IMR-90 (cell line): ENCODE measurements at regions of chr6 and their contacts with region 1.

Region 1: DNA sequence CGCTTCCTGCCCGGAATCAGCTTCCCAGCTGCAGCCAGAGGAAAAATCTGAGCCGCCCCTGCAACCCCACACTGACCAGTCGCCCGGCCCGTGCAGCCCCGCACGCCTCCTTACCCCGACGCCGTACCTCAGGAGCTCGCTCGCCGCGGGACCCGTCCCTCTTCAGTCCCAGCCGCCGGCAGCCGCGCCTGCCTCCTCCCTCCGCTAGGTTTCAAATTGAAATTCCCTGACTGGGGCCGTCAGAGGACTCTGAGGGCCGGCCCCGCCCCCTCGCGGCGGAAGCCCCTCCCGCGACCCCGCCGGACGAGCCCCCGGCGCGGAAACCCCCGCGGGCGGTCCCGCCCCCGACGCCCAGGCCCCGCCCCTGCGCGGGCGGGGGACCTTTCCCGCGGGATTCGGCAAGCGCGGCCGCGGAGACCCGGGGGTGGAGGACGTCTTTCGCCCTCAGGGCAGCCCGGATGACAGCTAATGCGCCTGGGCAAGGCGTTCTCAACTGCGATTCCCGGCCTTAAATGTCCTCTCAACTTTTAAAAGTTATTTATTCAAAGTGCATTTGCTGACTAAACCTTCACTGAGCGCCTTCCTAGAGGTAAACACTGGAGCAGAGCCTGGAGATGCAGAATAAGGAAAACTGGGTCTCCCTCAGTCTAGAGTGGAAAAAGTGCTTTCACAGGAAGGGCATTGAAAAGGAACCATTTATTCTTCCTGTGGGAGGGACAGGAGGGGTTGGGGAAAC is at the start of gene EPB41L2:
- DNase-seq: peak; percentile 86
- ATAC-seq: peak; percentile 93
- H3K4me3 ChIP-seq: peak within 1 kb of the TSS; percentile 65
- H3K27ac ChIP-seq: peak within 1 kb of the TSS; percentile 87
- H3K4me1 ChIP-seq: 0 out of 2 replicates have a peak, but pooled peaks cover 3% of the 10 kb centered on the region
- H3K27me3 ChIP-seq: no peaks in the 10 kb centered on the region
- CTCF ChIP-seq: peak; percentile 20; the same call in 1 of the 2 replicates
- POLR2A ChIP-seq: peak; percentile 84
- RAD21 ChIP-seq: peak; percentile 17
- total RNA-seq, gene EPB41L2: 85.7 and 89.2 TPM in 2 replicates

Region 2: GRCh38 chr6:130929036-130929678 is 134.0 kb before region 1 on chr6:
- CTCF ChIA-PET with region 1: interaction called, 3 read pairs
- POLR2A ChIA-PET with region 1: no interaction called
- dilution Hi-C with region 1: no loop called
- in situ Hi-C with region 1: no loop called
- intact Hi-C with region 1: loop called (anchors 5 kb)
- DNase-seq: peak; percentile 91
- ATAC-seq: peak; percentile 76
- H3K4me3 ChIP-seq: peak overlapping the region; percentile 26; the same call in 1 of the 2 replicates
- H3K27ac ChIP-seq: peak overlapping the region; percentile 39; the same call in 1 of the 2 replicates
- H3K4me1 ChIP-seq: peaks cover 19% of the 10 kb centered on the region
- H3K27me3 ChIP-seq: no peaks in the 10 kb centered on the region
- CTCF ChIP-seq: no peak
- POLR2A ChIP-seq: no peak
- RAD21 ChIP-seq: no peak

Region 3: DNA sequence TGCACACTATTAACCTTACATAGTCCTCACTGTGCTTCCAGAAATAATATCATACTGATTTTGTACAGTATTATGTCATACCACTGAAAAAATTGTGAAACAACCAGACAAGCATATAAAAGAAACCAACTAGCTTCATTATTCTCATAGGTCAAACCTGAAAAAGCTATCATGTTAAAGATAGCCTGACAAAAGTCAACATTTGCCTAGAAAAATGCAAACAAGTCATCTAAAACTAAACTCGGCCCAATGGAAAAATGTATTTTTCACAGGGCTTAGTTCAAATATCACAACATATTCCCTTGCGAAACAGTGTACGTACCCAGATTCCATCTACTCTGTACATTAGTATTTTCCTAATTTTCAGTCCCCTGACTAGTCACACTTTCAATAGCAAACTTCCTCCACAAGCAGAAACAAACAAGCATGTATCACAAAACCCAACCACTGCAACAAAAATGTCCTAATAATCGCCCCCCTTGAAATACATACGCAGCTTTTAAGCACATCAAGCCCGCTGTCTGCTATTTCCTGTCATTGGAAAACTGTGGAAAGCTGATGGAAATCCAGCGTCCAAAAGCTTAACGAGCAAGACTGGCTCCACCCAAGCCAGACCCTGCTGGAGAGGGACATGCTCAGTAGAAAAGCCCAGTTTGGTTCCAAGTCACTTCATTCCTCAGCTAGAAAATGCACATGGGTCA is 93.3 kb before region 1 on chr6:
- CTCF ChIA-PET with region 1: no interaction called
- POLR2A ChIA-PET with region 1: interaction called, 3 read pairs
- dilution Hi-C with region 1: no loop called
- in situ Hi-C with region 1: no loop called
- intact Hi-C with region 1: loop called (anchors 2 kb)
- DNase-seq: peak; percentile 67
- ATAC-seq: peak; percentile 53
- H3K4me3 ChIP-seq: peak overlapping the region; percentile 37
- H3K27ac ChIP-seq: peak overlapping the region; percentile 84
- H3K4me1 ChIP-seq: peaks cover 24% of the 10 kb centered on the region
- H3K27me3 ChIP-seq: no peaks in the 10 kb centered on the region
- CTCF ChIP-seq: no peak
- POLR2A ChIP-seq: no peak
- RAD21 ChIP-seq: no peak

Region 4: GRCh38 chr6:131029626-131030297 is 33.4 kb before region 1 on chr6:
- CTCF ChIA-PET with region 1: no interaction called
- POLR2A ChIA-PET with region 1: no interaction called
- dilution Hi-C with region 1: no loop called
- in situ Hi-C with region 1: no loop called
- intact Hi-C with region 1: loop called (anchors 2 kb)
- DNase-seq: peak; percentile 65
- ATAC-seq: peak; percentile 78
- H3K4me3 ChIP-seq: no peak overlapping the region
- H3K27ac ChIP-seq: peak overlapping the region; percentile 84
- H3K4me1 ChIP-seq: peaks cover 11% of the 10 kb centered on the region
- H3K27me3 ChIP-seq: no peaks in the 10 kb centered on the region
- CTCF ChIP-seq: no peak
- POLR2A ChIP-seq: no peak
- RAD21 ChIP-seq: no peak

Region 5: GRCh38 chr6:131116749-131117360 is 53.7 kb after region 1 on chr6:
- CTCF ChIA-PET with region 1: no interaction called
- POLR2A ChIA-PET with region 1: no interaction called
- dilution Hi-C with region 1: no loop called
- in situ Hi-C with region 1: no loop called
- intact Hi-C with region 1: loop called (anchors 1 kb)
- DNase-seq: peak; percentile 64
- ATAC-seq: peak; percentile 64
- H3K4me3 ChIP-seq: no peak overlapping the region
- H3K27ac ChIP-seq: no peak overlapping the region
- H3K4me1 ChIP-seq: no peaks in the 10 kb centered on the region; the same call in 1 of the 2 replicates
- H3K27me3 ChIP-seq: no peaks in the 10 kb centered on the region
- CTCF ChIP-seq: peak; percentile 60
- POLR2A ChIP-seq: no peak
- RAD21 ChIP-seq: peak; percentile 79

Region 6: DNA sequence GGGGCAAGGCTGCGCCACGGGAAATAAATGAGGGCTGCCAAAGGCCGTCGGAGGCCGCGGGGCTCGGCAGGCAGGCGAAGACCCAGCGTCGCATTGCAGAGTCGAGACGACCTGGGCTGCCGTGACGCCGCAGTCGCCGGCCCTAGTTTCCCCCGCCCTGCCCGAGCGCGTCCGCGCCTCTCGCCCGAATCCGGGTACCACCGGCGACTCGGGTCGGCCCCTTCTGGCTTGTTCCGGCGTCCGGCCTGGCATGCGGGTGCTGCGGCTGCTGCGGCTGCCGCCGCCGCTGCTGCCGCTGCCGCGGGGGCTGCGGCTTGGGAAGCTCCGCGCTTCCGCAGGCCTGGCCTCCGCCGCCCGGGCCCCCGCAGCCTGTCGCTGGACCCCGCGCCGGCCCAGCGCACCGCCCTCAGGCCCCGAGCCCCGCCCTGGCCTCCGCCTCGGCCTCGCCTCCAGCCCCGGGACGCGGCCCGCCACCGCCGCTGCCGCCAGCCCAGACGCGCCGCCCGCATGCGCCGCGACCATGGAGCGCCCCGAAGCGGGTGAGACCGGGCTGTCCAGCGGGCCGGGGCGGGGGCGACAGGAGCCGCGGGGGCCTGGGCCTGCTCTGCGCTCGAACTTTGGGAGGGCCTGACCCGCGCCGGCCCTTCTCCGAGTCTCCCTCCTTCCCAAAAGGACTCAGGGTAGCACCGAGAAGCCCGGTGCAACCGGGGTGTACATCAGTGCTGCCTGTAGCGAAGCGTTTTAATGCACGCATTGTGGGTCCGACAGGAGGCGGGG is 72.2 kb after region 1 on chr6 and contains the start of gene AKAP7:
- CTCF ChIA-PET with region 1: no interaction called
- POLR2A ChIA-PET with region 1: no interaction called
- dilution Hi-C with region 1: no loop called
- in situ Hi-C with region 1: no loop called
- intact Hi-C with region 1: loop called (anchors 2 kb)
- DNase-seq: peak; percentile 39
- ATAC-seq: peak; percentile 97
- H3K4me3 ChIP-seq: peak within 1 kb of the TSS; percentile 53
- H3K27ac ChIP-seq: peak within 1 kb of the TSS; percentile 75
- H3K4me1 ChIP-seq: peaks cover 2% of the 10 kb centered on the region
- H3K27me3 ChIP-seq: no peaks in the 10 kb centered on the region
- CTCF ChIP-seq: no peak
- POLR2A ChIP-seq: no peak
- RAD21 ChIP-seq: no peak
- total RNA-seq, gene AKAP7: 0.54 and 3.3 TPM in 2 replicates

Region 7: DNA sequence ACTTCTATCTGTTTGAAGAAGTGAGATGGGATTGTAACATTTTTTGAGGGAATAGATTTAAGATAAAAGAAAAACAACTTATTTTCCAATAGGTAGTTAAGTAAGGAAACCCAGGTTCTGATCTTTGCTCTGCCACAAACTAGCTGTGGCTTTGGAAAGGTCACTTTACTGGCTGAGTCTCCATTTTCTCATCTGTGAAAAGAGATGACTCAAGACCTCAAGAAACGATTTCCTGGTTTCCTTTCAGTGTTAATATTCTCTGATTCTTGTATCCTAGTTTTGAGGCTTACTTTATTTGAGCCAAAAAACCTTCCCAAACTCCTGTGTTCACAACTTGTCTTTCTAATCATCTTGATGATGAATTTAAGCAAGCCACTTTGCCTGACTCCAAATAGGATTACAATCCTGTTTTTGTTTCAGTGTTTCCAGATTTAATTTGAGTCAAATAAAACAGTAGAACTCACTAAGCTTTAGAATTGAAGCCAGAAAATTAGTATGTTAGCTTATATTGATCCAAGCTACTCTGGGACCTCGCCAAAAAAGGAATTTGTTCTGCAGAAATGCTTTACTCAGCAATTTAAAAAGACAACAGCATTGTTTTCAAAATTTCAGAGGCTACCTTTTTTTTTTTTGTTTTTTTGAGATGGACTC is 795.7 kb after region 1 on chr6:
- CTCF ChIA-PET with region 1: no interaction called
- POLR2A ChIA-PET with region 1: no interaction called
- dilution Hi-C with region 1: no loop called
- in situ Hi-C with region 1: no loop called
- intact Hi-C with region 1: no loop called
- DNase-seq: peak; percentile 82
- ATAC-seq: peak; percentile 42; the same call in 1 of the 2 replicates
- H3K4me3 ChIP-seq: no peak overlapping the region
- H3K27ac ChIP-seq: no peak overlapping the region
- H3K4me1 ChIP-seq: peaks cover 7% of the 10 kb centered on the region; the same call in 1 of the 2 replicates
- H3K27me3 ChIP-seq: no peaks in the 10 kb centered on the region
- CTCF ChIP-seq: no peak
- POLR2A ChIP-seq: no peak
- RAD21 ChIP-seq: no peak